CD4-positive, alpha-beta memory T cell (primary cell): ENCODE measurements at regions of chr11 and their contacts with region 1.

Region 1: DNA sequence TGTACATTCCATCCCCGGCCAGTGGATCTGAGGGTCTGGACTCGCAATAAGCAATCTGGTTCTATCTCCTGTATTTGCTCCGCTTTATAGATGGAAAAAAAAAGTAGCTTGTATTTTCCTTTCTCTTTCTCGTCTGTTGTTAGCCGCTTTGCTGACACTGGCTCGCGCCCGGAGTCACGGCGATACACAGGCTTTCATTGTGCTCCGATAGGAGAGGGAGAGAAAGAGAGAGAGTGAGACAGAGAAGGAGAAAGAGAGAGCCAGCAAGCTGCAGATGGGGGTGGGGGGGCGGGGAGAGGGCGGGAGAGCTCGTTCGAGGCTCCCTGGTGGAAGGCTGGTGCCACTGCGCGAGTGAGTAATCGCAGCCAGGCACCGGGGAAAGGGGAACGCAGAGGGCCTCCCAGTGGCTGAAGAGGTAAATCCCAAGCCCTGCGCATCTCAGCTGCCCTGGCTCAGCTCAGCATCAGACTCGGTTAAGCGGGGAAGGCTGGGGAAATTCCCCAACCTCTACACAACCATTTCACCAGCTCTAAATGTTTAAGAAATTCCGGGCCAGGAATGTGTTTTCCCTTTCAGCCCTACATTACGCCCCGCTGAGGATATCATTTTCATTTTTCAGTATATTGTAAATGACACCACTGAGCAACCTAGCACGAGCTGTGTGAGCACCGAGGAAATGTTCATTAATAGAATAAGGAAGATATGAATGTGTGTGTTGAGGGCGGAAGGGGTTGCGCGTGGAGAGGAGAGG is at the start of gene MAML2:
- DNase-seq: peak; percentile 84 to 96 (median 89)
- H3K4me3 ChIP-seq: peak within 1 kb of the TSS; percentile 60 to 78
- H3K4me3 Mint-ChIP-seq: peak within 1 kb of the TSS; percentile 91 to 98 (median 94)
- H3K27ac ChIP-seq: peak within 1 kb of the TSS; percentile 75
- H3K27ac Mint-ChIP-seq: peak within 1 kb of the TSS; percentile 86 to 97 (median 96)
- H3K4me1 ChIP-seq: peaks cover 34% of the 10 kb centered on the region
- H3K4me1 Mint-ChIP-seq: peaks cover 23 to 46% (median 30%) of the 10 kb centered on the region in 4 donors
- H3K27me3 ChIP-seq: no peaks in the 10 kb centered on the region
- H3K27me3 Mint-ChIP-seq: no peaks in the 10 kb centered on the region
- total RNA-seq, gene MAML2: 37.5 to 38.3 TPM

Region 2: DNA sequence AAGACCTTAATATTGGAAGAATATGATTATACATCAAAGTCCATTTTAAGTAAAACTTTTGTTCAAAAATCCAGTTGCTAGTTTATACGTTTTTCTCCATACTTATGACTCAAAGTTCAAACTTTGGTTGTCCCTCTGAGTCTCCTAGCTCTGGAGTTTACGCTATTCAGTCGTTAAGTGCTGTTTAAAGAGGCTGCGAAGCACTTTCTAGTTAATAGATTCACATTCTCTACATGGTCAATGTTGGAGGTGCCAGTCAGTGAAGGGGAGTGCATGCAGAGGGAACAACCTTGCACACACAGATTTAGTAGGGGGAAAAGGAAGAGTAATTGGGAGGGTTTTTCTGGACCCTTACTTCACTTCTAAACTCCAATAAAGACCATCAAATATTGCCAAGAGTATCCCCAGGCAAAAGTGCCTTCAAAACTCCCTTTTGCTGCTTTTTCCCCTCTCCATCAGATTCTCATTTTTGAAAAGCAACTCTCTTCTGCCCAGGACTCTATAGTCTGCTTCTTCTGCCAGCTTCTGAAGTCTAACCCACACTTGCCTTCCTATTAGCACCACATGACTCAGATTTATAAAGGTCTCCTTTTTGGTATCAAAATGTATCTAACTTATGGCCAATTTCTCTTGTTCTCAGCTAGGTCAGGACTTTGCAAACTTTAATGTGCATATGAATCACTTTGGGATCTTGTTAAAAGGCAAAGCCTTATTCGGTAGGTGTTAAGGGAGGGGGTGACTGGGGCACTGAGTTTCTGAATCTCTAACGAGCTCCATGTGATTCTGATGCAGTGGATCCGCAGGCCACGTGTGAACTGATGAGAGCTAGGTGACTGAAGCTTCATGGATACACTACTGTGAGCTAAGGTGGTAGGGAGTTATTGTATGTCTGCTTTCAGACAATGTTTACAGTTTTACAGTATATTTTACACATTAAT is 323.1 kb before region 1 on chr11:
- CTCF ChIA-PET with region 1: interaction called, 81 read pairs
- POLR2A ChIA-PET with region 1: interaction called, 69 read pairs
- intact Hi-C with region 1: no loop called
- DNase-seq: no peak
- H3K4me3 ChIP-seq: no peak overlapping the region
- H3K4me3 Mint-ChIP-seq: no peak overlapping the region
- H3K27ac ChIP-seq: no peak overlapping the region
- H3K27ac Mint-ChIP-seq: peak overlapping the region; percentile 38 to 83 (median 68)
- H3K4me1 ChIP-seq: peaks cover 19% of the 10 kb centered on the region
- H3K4me1 Mint-ChIP-seq: peaks cover 35 to 57% (median 39%) of the 10 kb centered on the region in 4 donors
- H3K27me3 ChIP-seq: no peaks in the 10 kb centered on the region
- H3K27me3 Mint-ChIP-seq: no peaks in the 10 kb centered on the region

Region 3: GRCh38 chr11:96082002-96082899 is 260.9 kb before region 1 on chr11:
- CTCF ChIA-PET with region 1: interaction called, 176 read pairs
- POLR2A ChIA-PET with region 1: interaction called, 3 read pairs
- intact Hi-C with region 1: no loop called
- DNase-seq: no peak
- H3K4me3 ChIP-seq: no peak overlapping the region
- H3K4me3 Mint-ChIP-seq: no peak overlapping the region
- H3K27ac ChIP-seq: no peak overlapping the region
- H3K27ac Mint-ChIP-seq: no peak overlapping the region
- H3K4me1 ChIP-seq: peaks cover 4% of the 10 kb centered on the region
- H3K4me1 Mint-ChIP-seq: peaks cover 22 to 40% (median 31%) of the 10 kb centered on the region in 4 donors
- H3K27me3 ChIP-seq: no peaks in the 10 kb centered on the region
- H3K27me3 Mint-ChIP-seq: no peaks in the 10 kb centered on the region

Region 4: GRCh38 chr11:96197801-96198701 is 145.1 kb before region 1 on chr11:
- CTCF ChIA-PET with region 1: interaction called, 49 read pairs
- POLR2A ChIA-PET with region 1: interaction called, 21 read pairs
- intact Hi-C with region 1: no loop called
- DNase-seq: no peak
- H3K4me3 ChIP-seq: no peak overlapping the region
- H3K4me3 Mint-ChIP-seq: peak overlapping the region in 7 of 8 donors; percentile 2 to 72 (median 46)
- H3K27ac ChIP-seq: no peak overlapping the region
- H3K27ac Mint-ChIP-seq: peak overlapping the region; percentile 61 to 93 (median 84)
- H3K4me1 ChIP-seq: peaks cover 71% of the 10 kb centered on the region
- H3K4me1 Mint-ChIP-seq: peaks cover 62 to 88% (median 74%) of the 10 kb centered on the region in 4 donors
- H3K27me3 ChIP-seq: no peaks in the 10 kb centered on the region
- H3K27me3 Mint-ChIP-seq: no peaks in the 10 kb centered on the region

Region 5: DNA sequence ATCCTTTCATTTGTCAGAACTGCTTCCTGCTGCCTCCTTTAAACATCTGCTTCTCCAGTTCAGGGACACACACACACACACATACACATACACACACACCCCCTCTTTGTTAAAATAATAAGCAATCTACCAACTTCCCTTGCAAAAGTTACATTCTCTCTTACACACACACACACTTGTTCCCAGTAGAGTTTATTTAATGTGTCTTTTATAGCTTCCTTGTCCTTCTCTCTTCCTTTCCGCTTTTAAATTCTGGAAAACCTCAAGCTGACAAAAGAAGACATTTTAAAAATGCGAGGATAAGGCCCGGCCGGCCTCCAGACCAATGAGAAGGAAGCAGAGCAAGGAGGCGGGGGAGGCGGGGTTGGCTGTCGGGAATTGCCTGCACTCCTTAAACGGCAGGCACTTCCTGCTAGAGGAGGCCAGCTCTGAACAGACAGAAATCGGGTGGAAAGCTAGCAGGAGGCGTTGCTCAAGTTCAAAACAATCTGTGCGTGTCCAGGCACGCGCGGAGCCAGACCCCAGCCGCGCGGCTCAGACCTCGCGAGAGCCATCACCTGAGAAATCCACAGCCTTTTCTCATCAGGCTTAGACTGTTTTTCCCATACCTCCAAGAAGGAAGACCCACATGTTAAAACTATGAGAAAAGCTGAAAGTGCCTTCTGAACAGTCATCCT is 100.0 kb before region 1 on chr11:
- CTCF ChIA-PET with region 1: interaction called, 78 read pairs
- POLR2A ChIA-PET with region 1: interaction called, 53 read pairs
- intact Hi-C with region 1: loop called (anchors 1 kb)
- DNase-seq: peak; percentile 65 to 89 (median 68)
- H3K4me3 ChIP-seq: peak overlapping the region; percentile 33 to 57
- H3K4me3 Mint-ChIP-seq: peak overlapping the region; percentile 85 to 93 (median 90)
- H3K27ac ChIP-seq: peak overlapping the region; percentile 63
- H3K27ac Mint-ChIP-seq: peak overlapping the region; percentile 88 to 97 (median 93)
- H3K4me1 ChIP-seq: peaks cover 47% of the 10 kb centered on the region
- H3K4me1 Mint-ChIP-seq: peaks cover 28 to 57% (median 48%) of the 10 kb centered on the region in 4 donors
- H3K27me3 ChIP-seq: no peaks in the 10 kb centered on the region
- H3K27me3 Mint-ChIP-seq: no peaks in the 10 kb centered on the region

Region 6: DNA sequence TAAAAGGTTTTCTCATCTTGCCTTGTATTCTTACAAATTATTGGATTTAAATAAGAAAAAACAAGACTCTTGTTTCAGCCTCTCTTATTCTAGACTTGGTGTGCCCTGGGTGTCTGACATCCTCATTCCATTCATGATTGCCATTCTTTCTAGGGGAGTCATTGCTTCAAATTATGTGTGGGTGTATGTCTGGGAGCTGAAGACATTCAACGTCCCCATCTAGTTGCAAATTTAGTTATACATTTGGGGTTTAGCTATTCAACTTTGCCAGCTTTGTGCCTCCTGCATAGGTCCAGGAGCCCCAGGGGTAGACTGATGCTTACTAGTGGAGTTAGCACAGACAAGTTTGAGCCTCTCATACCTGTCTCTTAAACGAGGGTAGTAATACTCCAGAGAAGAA is 18.2 kb before region 1 on chr11:
- CTCF ChIA-PET with region 1: interaction called, 37 read pairs
- POLR2A ChIA-PET with region 1: interaction called, 4 read pairs
- intact Hi-C with region 1: loop called (anchors 2 kb)
- DNase-seq: no peak
- H3K4me3 ChIP-seq: no peak overlapping the region
- H3K4me3 Mint-ChIP-seq: no peak overlapping the region
- H3K27ac ChIP-seq: no peak overlapping the region
- H3K27ac Mint-ChIP-seq: peak overlapping the region in 5 of 7 donors; percentile 5 to 54 (median 11)
- H3K4me1 ChIP-seq: peaks cover 28% of the 10 kb centered on the region
- H3K4me1 Mint-ChIP-seq: peaks cover 45 to 88% (median 64%) of the 10 kb centered on the region in 4 donors
- H3K27me3 ChIP-seq: no peaks in the 10 kb centered on the region
- H3K27me3 Mint-ChIP-seq: no peaks in the 10 kb centered on the region